ENCODE measurements at regions of chr12 and their contacts with region 1.

Region 1: DNA sequence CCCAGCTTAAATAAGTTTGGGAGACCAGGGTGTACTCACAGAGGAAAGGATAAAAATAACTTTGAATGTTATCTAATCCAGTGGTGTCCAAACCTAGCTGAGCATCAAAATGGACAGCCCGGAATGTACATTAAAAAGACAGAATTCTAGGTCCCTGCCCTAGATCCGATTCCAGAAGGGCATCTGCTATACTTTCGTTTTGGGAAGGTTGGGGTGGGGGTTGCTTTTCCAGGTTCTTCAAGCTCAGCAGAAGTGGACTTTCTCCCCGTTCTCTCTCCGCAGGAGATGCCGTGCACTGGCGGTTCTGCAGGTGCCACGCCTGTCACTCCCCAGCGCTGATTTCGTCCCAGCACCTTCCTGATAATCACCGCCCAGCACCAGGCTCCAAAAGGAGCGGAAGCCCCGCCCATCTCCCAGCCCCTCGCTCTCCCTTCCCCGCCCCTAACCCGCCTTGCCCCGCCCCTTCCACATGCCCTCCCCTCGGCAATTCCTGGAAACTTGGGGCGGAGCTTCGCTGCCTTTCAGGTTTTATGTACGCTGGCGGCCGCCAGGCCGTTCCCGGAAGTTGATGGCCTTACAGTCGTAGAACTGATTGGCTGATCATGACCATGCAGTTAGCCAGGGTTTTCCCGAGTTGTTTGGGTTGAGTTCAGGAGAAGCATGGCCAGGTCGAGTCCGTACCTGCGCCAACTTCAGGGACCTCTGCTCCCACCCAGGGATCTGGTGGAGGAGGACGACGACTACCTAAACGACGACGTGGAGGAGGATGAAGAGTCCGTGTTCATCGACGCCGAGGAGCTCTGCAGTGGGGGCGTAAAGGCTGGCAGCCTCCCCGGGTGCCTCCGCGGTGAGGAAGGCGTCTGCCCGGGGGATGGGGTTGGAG is at the start of gene HELB:
- DNase-seq: peak; percentile 96 to 99
- ATAC-seq: peak; percentile 99 to 100 (median 99)
- H3K4me3 ChIP-seq: peak within 1 kb of the TSS; percentile 70
- H3K27ac ChIP-seq: peak within 1 kb of the TSS; percentile 53
- H3K4me1 ChIP-seq: peaks cover 15% of the 10 kb centered on the region
- H3K27me3 ChIP-seq: no peaks in the 10 kb centered on the region
- CTCF ChIP-seq: no peak
- total RNA-seq, gene HELB: 0.60 to 1.9 (median 1.5) TPM

Region 2: GRCh38 chr12:66130277-66131066 is 171.7 kb before region 1 on chr12 and contains the start of gene LLPH:
- intact Hi-C with region 1: loop called in 1 of 2 experiments (anchors 5 kb)
- DNase-seq: peak; percentile 89 to 93
- ATAC-seq: peak; percentile 97 to 99 (median 98)
- H3K4me3 ChIP-seq: peak within 1 kb of the TSS; percentile 84
- H3K27ac ChIP-seq: peak within 1 kb of the TSS; percentile 67
- H3K4me1 ChIP-seq: peaks cover 17% of the 10 kb centered on the region
- H3K27me3 ChIP-seq: no peaks in the 10 kb centered on the region
- CTCF ChIP-seq: no peak
- total RNA-seq, gene LLPH: 13.4 to 28.9 (median 22.0) TPM

Region 3: DNA sequence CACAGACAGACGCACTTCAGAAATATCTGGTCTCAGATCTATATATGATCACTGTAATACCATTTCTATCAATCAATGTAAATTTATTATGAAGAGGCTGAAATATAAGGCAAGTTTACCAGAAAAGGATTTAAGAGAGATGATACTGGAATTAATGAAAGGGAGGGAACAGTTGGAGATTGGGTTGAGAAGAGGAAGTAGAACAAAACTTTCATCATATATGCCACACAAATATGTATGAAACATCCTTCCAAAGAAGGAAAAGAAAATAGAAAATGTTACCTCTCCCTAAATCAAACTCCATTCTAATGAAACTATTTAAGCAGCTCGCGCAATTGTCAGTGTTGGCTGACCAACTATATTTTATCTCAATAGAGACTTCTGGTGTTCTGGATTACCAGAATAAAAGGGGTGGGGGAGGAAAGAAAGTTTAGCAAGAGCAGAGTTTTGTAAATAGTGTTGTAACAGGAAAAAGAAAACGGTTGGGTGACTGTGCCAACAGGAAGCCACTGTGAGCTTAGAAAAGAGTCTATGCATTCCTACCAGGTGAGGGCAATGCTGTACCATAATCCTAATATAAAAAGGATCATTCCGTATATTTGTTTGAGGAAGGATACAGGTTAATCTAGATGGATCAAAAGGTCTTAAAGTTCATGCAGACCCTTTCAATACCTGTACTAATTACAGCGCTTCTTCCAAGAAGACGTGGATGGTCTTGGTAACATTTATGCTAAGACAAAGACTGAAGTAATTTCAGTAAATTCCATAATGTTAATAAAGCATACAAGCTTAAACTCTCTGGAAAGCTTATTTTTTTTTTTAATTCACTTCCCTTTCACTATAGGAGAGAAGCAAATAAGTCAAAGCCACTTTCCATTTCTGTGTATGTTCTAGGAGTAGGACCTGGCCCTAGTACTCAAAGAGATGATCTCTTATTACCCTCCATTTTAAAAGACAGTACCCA is 157.1 kb before region 1 on chr12:
- intact Hi-C with region 1: no loop called
- DNase-seq: no peak
- ATAC-seq: peak in 3 of 4 donors; percentile 65 to 86 (median 84)
- H3K4me3 ChIP-seq: no peak overlapping the region
- H3K27ac ChIP-seq: no peak overlapping the region
- H3K4me1 ChIP-seq: no peaks in the 10 kb centered on the region
- H3K27me3 ChIP-seq: no peaks in the 10 kb centered on the region
- CTCF ChIP-seq: peak; percentile 56

Region 4: GRCh38 chr12:66169221-66170170 is 132.7 kb before region 1 on chr12 and contains the start of gene TMBIM4:
- intact Hi-C with region 1: loop called in 1 of 2 experiments (anchors 2 kb)
- DNase-seq: peak; percentile 88 to 94
- ATAC-seq: peak; percentile 94 to 96 (median 95)
- H3K4me3 ChIP-seq: peak within 1 kb of the TSS; percentile 98
- H3K27ac ChIP-seq: peak within 1 kb of the TSS; percentile 100
- H3K4me1 ChIP-seq: peaks cover 13% of the 10 kb centered on the region
- H3K27me3 ChIP-seq: no peaks in the 10 kb centered on the region
- CTCF ChIP-seq: peak; percentile 56
- total RNA-seq, gene TMBIM4: 35.1 to 60.1 (median 42.3) TPM

Region 5: GRCh38 chr12:66365718-66366490 is 63.7 kb after region 1 on chr12:
- intact Hi-C with region 1: no loop called
- DNase-seq: no peak
- ATAC-seq: no peak
- H3K4me3 ChIP-seq: no peak overlapping the region
- H3K27ac ChIP-seq: no peak overlapping the region
- H3K4me1 ChIP-seq: no peaks in the 10 kb centered on the region
- H3K27me3 ChIP-seq: no peaks in the 10 kb centered on the region
- CTCF ChIP-seq: no peak

Region 6: DNA sequence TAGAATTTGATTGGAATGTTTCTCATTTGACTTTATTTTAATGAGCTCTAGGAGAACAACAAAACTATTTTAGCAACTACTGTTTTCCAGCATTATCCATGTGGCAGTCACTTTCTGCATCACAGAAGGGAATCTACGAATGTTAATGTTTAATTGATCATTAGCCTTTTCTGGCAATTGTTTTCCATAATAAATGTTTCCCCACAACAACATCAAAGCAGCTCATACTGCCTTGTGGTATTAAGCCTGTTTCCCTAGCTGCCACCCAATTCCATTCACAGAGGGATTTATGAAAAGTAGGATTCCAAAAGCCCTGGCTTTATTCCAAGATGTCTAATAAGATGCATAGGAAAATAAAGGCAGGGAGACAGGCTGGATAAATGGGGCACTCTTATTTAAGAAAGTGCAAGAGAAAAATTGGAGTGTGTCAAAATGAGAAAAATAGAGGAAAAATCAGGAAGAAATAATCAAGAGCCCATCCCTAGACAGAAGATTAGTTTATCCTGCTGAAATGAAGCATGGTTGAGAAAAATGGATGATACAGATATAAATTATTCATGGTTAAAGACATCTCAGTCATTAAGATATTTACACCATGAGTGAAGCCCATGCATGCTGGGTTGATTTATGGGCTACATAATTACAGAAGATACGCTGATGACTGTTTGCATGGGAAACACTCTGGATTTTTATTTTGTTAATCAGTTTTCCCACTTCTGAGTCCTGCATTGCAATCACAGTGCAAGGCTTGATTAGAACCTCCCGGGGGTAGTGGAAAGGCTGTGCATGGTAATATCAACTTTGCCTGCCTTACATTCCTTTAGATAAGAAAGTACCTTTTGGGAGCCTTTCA is 180.4 kb after region 1 on chr12:
- intact Hi-C with region 1: no loop called
- DNase-seq: no peak
- ATAC-seq: no peak
- H3K4me3 ChIP-seq: no peak overlapping the region
- H3K27ac ChIP-seq: no peak overlapping the region
- H3K4me1 ChIP-seq: no peaks in the 10 kb centered on the region
- H3K27me3 ChIP-seq: no peaks in the 10 kb centered on the region
- CTCF ChIP-seq: no peak

Measured in psoas muscle (tissue), 8 donors.